AG04450 (cell line): ENCODE measurements at regions of chr12 and their contacts with region 1.

Region 1: GRCh38 chr12:15590180-15590826 is 198.9 kb downstream of the EPS8 start:
- DNase-seq: peak; percentile 41
- H3K4me3 ChIP-seq: peak overlapping the region; percentile 56
- H3K27ac ChIP-seq: no peak overlapping the region
- H3K27me3 ChIP-seq: no peaks in the 10 kb centered on the region
- CTCF ChIP-seq: peak; percentile 95

Region 2: GRCh38 chr12:15494329-15495046 is 95.8 kb before region 1 on chr12:
- CTCF ChIA-PET with region 1: no interaction called
- POLR2A ChIA-PET with region 1: no interaction called
- DNase-seq: no peak
- H3K4me3 ChIP-seq: no peak overlapping the region
- H3K27ac ChIP-seq: no peak overlapping the region
- H3K27me3 ChIP-seq: no peaks in the 10 kb centered on the region
- CTCF ChIP-seq: no peak

Region 3: GRCh38 chr12:15627995-15628945 is 38.0 kb after region 1 on chr12:
- CTCF ChIA-PET with region 1: interaction called, 11 read pairs
- POLR2A ChIA-PET with region 1: no interaction called
- DNase-seq: no peak
- H3K4me3 ChIP-seq: no peak overlapping the region
- H3K27ac ChIP-seq: peak overlapping the region; percentile 88
- H3K27me3 ChIP-seq: no peaks in the 10 kb centered on the region
- CTCF ChIP-seq: no peak

Region 4: DNA sequence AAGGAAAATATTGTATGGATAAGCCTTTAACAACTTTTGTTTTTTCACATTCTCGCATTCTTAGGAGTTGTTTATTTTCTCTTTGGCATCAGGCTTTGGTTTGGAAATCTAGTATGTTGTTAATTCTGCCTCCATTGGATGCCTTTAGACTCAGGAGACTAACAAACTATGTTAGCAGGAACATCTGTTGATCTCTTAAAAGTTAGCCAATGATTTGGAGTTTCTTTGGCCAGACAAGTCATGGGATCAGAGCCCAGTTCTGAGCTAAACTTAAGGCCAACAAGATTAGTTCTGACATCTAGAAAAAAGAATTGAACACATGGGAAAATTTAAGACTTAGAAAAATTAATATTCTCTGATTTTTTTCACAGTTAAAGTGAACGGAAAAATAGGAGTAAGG is 256.6 kb after region 1 on chr12:
- CTCF ChIA-PET with region 1: interaction called, 19 read pairs
- POLR2A ChIA-PET with region 1: no interaction called
- DNase-seq: no peak
- H3K4me3 ChIP-seq: no peak overlapping the region
- H3K27ac ChIP-seq: no peak overlapping the region
- H3K27me3 ChIP-seq: no peaks in the 10 kb centered on the region
- CTCF ChIP-seq: no peak

Region 5: DNA sequence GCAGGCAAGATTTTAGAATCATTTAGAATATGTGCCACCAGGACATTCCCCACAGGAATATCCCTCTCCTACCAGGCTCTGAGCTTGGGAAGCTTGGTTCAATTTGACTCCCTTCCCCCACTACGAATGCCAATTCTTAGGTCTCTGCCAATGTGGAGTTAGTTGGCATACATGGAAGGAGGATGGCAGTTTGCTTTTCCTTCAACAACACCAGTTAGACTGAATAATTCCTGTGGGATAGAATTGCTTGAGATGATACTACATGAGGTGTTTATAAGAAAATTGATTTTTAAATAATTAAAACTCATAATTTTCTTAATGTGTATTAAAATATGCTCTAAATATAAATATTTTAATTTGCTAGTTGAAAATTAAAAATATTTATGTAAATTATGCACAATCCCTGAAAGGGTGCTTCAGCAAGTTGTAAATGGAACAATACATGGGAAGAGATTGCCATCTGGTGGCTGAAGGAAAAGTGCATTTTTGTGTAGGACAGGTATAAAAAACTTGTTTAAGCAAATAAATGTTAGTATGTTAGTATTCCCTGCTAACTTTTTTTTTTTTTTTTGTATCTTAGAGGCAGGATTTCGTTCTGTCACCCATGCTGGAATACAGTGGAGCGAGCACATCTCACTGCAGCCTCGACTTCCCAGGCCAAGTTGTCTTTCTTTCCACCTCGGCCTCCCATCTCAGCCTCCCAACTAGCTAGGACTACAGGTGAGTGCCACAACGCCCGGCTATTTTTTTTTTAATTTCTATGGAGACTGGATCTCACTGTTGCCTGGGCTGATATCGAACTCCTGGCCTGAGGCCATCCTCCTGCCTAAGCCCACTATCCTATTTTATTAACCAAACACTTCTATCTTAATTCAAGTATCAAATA is 266.0 kb after region 1 on chr12:
- CTCF ChIA-PET with region 1: interaction called, 157 read pairs
- POLR2A ChIA-PET with region 1: no interaction called
- DNase-seq: no peak
- H3K4me3 ChIP-seq: no peak overlapping the region
- H3K27ac ChIP-seq: no peak overlapping the region
- H3K27me3 ChIP-seq: no peaks in the 10 kb centered on the region
- CTCF ChIP-seq: peak; percentile 77